ENCODE measurements at regions of chr1 and their contacts with region 1.

Region 1: GRCh38 chr1:78440381-78440793 is 50.4 kb upstream of the PTGFR start:
- DNase-seq: peak; percentile 80
- ATAC-seq: peak; percentile 72
- H3K4me3 ChIP-seq: no peak overlapping the region
- H3K27ac ChIP-seq: peak overlapping the region; percentile 89
- H3K4me1 ChIP-seq: peaks cover 45% of the 10 kb centered on the region
- H3K27me3 ChIP-seq: no peaks in the 10 kb centered on the region
- CTCF ChIP-seq: no peak

Region 2: GRCh38 chr1:78348496-78349284 is 91.7 kb before region 1 on chr1:
- CTCF ChIA-PET with region 1: no interaction called
- POLR2A ChIA-PET with region 1: no interaction called
- intact Hi-C with region 1: loop called (anchors 5 kb)
- DNase-seq: no peak
- ATAC-seq: no peak
- H3K4me3 ChIP-seq: no peak overlapping the region
- H3K27ac ChIP-seq: no peak overlapping the region
- H3K4me1 ChIP-seq: peaks cover 10% of the 10 kb centered on the region; the same call in 1 of the 2 replicates
- H3K27me3 ChIP-seq: no peaks in the 10 kb centered on the region
- CTCF ChIP-seq: no peak

Region 3: DNA sequence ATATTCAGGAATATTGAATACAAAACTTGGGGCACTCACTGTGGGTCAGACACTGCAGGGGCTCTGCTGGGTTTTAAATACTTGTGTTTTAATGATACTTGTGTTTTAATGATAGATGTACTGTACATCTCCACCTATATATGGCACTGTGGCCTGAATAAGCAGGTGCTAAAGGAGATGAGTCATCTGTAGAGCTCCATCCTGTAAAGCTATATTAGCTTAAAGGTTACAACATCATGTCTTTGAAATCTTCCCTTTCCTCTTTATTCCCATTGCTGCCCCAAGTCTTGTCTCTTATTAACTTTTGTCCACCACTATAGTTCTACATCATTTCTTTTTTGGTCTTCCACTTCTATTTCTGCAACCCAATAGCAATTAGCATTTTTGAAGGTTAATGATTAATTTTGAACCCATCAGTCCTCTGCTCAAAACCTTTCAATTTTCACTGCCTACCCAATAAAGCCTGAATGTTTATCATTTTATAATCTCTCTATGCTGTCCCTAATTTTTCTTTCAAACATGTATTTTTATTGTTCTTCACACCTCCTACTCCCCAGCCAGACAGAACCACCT is 62.9 kb before region 1 on chr1:
- CTCF ChIA-PET with region 1: no interaction called
- POLR2A ChIA-PET with region 1: no interaction called
- intact Hi-C with region 1: loop called (anchors 5 kb)
- DNase-seq: peak; percentile 61
- ATAC-seq: peak; percentile 96
- H3K4me3 ChIP-seq: no peak overlapping the region
- H3K27ac ChIP-seq: no peak overlapping the region
- H3K4me1 ChIP-seq: peaks cover 8% of the 10 kb centered on the region
- H3K27me3 ChIP-seq: no peaks in the 10 kb centered on the region
- CTCF ChIP-seq: 0 out of 2 replicates have a peak, but pooled peaks have one; percentile 25

Region 4: DNA sequence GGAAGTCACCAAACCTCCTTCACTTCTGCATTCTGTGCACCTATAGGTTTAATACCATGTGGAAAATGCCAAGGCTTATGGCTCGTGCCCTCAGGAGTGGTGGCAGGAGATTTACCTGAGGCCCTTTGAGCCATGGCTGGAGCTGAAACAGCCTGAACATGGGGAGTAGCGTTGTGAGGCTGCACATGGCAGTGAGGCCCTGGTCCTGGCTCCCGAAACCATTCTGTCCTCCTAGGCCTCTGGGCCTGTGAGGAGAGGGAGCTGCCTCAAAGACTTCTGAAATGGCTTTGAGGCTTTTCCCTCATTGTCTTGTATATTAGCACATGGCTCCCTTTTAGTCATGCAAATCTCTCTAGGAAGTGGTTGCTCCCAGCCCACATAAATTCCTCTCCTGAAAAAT is 70.9 kb after region 1 on chr1:
- CTCF ChIA-PET with region 1: no interaction called
- POLR2A ChIA-PET with region 1: no interaction called
- intact Hi-C with region 1: no loop called
- DNase-seq: no peak
- ATAC-seq: no peak
- H3K4me3 ChIP-seq: no peak overlapping the region
- H3K27ac ChIP-seq: no peak overlapping the region
- H3K4me1 ChIP-seq: no peaks in the 10 kb centered on the region
- H3K27me3 ChIP-seq: no peaks in the 10 kb centered on the region
- CTCF ChIP-seq: no peak